Activated CD4-positive, alpha-beta T cell treated with anti-CD3 and anti-CD28 coated beads, Interleukin-2, amount 10 ng/mL, durations not matched to agents 7 days and 5 days (primary cell): ENCODE measurements at regions of chr11 and their contacts with region 1.

Region 1: DNA sequence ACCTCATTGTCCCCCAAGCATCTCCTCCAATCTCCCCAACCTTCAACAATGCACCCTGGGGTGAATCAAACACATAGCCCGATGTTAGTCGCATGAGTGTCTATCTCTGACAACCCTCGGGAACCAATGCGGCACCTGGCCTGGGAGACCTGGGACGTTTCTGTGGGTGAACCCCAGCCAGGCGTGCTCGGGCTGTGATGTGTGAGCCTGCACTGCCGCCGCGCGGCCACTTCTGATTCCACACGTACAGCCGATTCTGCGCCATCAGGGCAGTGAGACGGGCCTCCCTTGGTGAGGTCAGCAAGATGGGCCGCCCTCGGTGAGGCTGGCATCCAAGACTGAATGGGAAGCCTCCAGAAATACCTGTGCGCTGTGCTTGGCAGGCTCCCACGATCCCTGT is 5.2 kb upstream of the H19 start:
- DNase-seq: no peak
- H3K4me3 Mint-ChIP-seq: no peak overlapping the region
- H3K27ac Mint-ChIP-seq: no peak overlapping the region
- H3K4me1 Mint-ChIP-seq: no peaks in the 10 kb centered on the region
- H3K27me3 Mint-ChIP-seq: no peaks in the 10 kb centered on the region

Region 2: GRCh38 chr11:1652771-1653540 is 349.9 kb before region 1 on chr11:
- CTCF ChIA-PET with region 1: interaction called, 14 read pairs
- POLR2A ChIA-PET with region 1: no interaction called
- DNase-seq: peak; percentile 77
- H3K4me3 Mint-ChIP-seq: no peak overlapping the region
- H3K27ac Mint-ChIP-seq: no peak overlapping the region
- H3K4me1 Mint-ChIP-seq: no peaks in the 10 kb centered on the region
- H3K27me3 Mint-ChIP-seq: peaks cover 3% of the 10 kb centered on the region

Region 3: GRCh38 chr11:1832211-1832919 is 170.4 kb before region 1 on chr11:
- CTCF ChIA-PET with region 1: interaction called, 28 read pairs
- POLR2A ChIA-PET with region 1: no interaction called
- DNase-seq: peak; percentile 57
- H3K4me3 Mint-ChIP-seq: no peak overlapping the region
- H3K27ac Mint-ChIP-seq: peak overlapping the region; percentile 60
- H3K4me1 Mint-ChIP-seq: no peaks in the 10 kb centered on the region
- H3K27me3 Mint-ChIP-seq: peaks cover 5% of the 10 kb centered on the region

Region 4: GRCh38 chr11:1983601-1983961 is 19.2 kb before region 1 on chr11:
- CTCF ChIA-PET with region 1: no interaction called
- POLR2A ChIA-PET with region 1: no interaction called
- DNase-seq: no peak
- H3K4me3 Mint-ChIP-seq: no peak overlapping the region
- H3K27ac Mint-ChIP-seq: no peak overlapping the region
- H3K4me1 Mint-ChIP-seq: no peaks in the 10 kb centered on the region
- H3K27me3 Mint-ChIP-seq: no peaks in the 10 kb centered on the region